MCF 10A (cell line): ENCODE measurements at regions of chrX and their contacts with region 1.

Region 1: GRCh38 chrX:130916636-130917422 is 13.8 kb upstream of the ENOX2 start:
- DNase-seq: peak; percentile 77
- H3K4me3 Mint-ChIP-seq: no peak overlapping the region
- H3K27ac Mint-ChIP-seq: no peak overlapping the region
- H3K4me1 Mint-ChIP-seq: no peaks in the 10 kb centered on the region
- H3K27me3 Mint-ChIP-seq: peaks cover 35% of the 10 kb centered on the region
- CTCF ChIP-seq: peak; percentile 91

Region 2: GRCh38 chrX:130304587-130305368 is 612.1 kb before region 1 on chrX:
- CTCF ChIA-PET with region 1: no interaction called
- POLR2A ChIA-PET with region 1: no interaction called
- intact Hi-C with region 1: no loop called
- DNase-seq: no peak
- H3K4me3 Mint-ChIP-seq: no peak overlapping the region
- H3K27ac Mint-ChIP-seq: no peak overlapping the region
- H3K4me1 Mint-ChIP-seq: no peaks in the 10 kb centered on the region
- H3K27me3 Mint-ChIP-seq: no peaks in the 10 kb centered on the region
- CTCF ChIP-seq: no peak

Region 3: DNA sequence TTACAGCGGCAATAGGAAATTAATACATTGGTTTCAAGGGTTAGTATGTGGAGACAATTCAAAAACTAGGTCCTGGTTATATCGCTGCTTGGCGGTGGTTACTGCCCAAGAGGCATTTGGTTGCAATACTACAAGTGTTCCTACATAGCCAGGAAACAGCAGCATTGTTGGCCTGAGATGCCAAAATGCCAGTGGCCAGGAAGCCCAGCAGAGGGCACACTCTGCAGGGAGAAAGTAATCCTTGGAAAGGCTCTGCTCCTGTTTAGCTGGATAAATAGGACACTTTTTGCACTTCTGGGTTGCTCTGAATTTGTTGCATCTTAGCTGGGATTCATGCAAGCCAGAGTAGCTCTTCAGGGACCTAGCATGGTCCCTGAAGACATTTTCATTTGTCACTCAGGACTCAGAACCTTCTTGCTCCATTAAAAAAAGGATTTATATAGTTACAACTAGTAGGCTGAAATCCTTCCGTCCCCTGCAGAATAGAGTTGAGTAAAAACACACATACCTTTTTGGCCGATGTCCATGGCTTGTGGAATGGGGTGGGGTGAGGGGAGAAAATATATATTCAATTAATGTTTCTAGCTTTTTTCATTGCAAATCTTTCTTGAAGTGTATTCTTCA is 523.3 kb before region 1 on chrX:
- CTCF ChIA-PET with region 1: interaction called, 126 read pairs
- POLR2A ChIA-PET with region 1: no interaction called
- intact Hi-C with region 1: loop called (anchors 1 kb)
- DNase-seq: peak; percentile 63
- H3K4me3 Mint-ChIP-seq: no peak overlapping the region
- H3K27ac Mint-ChIP-seq: no peak overlapping the region
- H3K4me1 Mint-ChIP-seq: no peaks in the 10 kb centered on the region
- H3K27me3 Mint-ChIP-seq: peaks cover 45% of the 10 kb centered on the region
- CTCF ChIP-seq: peak; percentile 82

Region 4: DNA sequence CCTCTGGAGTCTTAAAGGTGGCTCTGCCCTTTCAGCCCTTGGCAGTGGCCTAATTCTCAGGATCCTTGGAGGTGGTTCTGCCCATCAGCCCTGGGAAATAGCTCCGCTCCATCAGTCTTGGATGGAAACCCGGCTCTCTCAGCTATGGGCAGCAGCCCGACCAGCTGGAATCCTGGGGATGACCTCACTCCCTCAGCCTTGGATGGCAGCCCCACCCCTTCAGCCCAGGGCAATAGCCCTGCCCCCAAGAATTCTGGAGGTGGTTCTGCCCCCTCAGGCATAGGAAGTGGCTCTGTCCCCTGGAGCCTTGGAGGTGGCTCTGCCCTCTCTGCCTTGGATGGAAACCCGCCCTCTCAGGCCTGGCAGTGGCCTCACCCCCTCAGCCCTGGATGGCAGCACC is 387.3 kb before region 1 on chrX:
- CTCF ChIA-PET with region 1: interaction called, 10 read pairs
- POLR2A ChIA-PET with region 1: no interaction called
- intact Hi-C with region 1: no loop called
- DNase-seq: no peak
- H3K4me3 Mint-ChIP-seq: no peak overlapping the region
- H3K27ac Mint-ChIP-seq: no peak overlapping the region
- H3K4me1 Mint-ChIP-seq: no peaks in the 10 kb centered on the region
- H3K27me3 Mint-ChIP-seq: peaks cover 25% of the 10 kb centered on the region
- CTCF ChIP-seq: no peak

Region 5: DNA sequence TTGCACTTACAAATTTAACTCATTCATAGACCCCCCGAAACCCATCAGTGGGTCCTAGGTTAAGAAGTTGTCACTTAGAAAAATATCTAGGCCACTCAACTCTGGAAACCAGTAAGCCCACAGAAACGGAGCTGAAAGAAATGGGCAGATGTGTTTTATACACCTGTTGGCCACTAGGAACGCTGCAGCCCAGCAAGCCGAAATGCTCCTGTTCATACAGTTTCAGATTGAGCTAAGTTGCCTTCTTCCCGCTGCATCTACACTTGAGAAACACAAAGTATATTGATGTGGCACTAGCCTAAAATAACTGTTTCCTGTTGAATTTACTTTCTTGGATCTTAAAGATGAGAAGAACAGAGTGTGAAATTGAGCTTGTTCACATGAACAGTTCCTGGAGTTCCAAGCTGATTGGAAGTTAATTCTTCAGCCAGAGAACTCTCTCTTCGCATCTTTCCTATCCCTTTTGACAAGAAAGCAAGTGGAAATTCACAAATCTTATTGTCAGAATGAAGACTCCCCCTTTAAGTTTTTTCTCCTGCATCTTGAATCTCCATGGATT is 340.9 kb before region 1 on chrX:
- CTCF ChIA-PET with region 1: interaction called, 29 read pairs
- POLR2A ChIA-PET with region 1: no interaction called
- intact Hi-C with region 1: loop called (anchors 1 kb)
- DNase-seq: peak; percentile 58
- H3K4me3 Mint-ChIP-seq: no peak overlapping the region
- H3K27ac Mint-ChIP-seq: no peak overlapping the region
- H3K4me1 Mint-ChIP-seq: no peaks in the 10 kb centered on the region
- H3K27me3 Mint-ChIP-seq: peaks cover 42% of the 10 kb centered on the region
- CTCF ChIP-seq: peak; percentile 72

Region 6: GRCh38 chrX:130746709-130747342 is 170.0 kb before region 1 on chrX:
- CTCF ChIA-PET with region 1: no interaction called
- POLR2A ChIA-PET with region 1: no interaction called
- intact Hi-C with region 1: no loop called
- DNase-seq: no peak
- H3K4me3 Mint-ChIP-seq: no peak overlapping the region
- H3K27ac Mint-ChIP-seq: no peak overlapping the region
- H3K4me1 Mint-ChIP-seq: no peaks in the 10 kb centered on the region
- H3K27me3 Mint-ChIP-seq: peaks cover 6% of the 10 kb centered on the region
- CTCF ChIP-seq: no peak

Region 7: DNA sequence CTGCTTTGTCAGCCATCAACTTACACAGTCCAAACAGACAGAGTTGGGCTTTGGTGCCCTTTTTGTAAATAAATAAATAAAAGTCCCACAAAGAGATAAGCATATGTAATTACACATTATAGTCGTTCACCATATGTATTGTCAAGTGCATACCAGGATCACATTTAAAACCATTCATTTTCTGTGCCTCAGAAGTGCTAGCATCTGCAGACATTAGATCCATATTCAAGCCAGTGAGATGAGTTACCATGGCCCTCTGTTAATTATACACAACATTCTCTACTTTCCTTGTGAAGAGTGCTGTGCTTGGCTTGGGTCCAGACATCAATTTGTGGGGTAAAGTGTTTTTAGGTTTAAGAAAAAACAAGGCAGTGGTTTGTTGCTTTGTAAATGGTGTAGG is 90.6 kb before region 1 on chrX:
- CTCF ChIA-PET with region 1: no interaction called
- POLR2A ChIA-PET with region 1: no interaction called
- intact Hi-C with region 1: no loop called
- DNase-seq: no peak
- H3K4me3 Mint-ChIP-seq: no peak overlapping the region
- H3K27ac Mint-ChIP-seq: no peak overlapping the region
- H3K4me1 Mint-ChIP-seq: peaks cover 12% of the 10 kb centered on the region
- H3K27me3 Mint-ChIP-seq: peaks cover 31% of the 10 kb centered on the region
- CTCF ChIP-seq: no peak

Region 8: GRCh38 chrX:130944230-130944629 is 27.4 kb after region 1 on chrX:
- CTCF ChIA-PET with region 1: interaction called, 11 read pairs
- POLR2A ChIA-PET with region 1: no interaction called
- intact Hi-C with region 1: no loop called
- DNase-seq: no peak
- H3K4me3 Mint-ChIP-seq: no peak overlapping the region
- H3K27ac Mint-ChIP-seq: no peak overlapping the region
- H3K4me1 Mint-ChIP-seq: no peaks in the 10 kb centered on the region
- H3K27me3 Mint-ChIP-seq: peaks cover 70% of the 10 kb centered on the region
- CTCF ChIP-seq: no peak